H1 (cell line): ENCODE measurements at regions of chr10 and their contacts with region 1.

Region 1: GRCh38 chr10:102352066-102352715 is 43.3 kb upstream of the NFKB2 start:
- DNase-seq: peak in 1 of 2 experiments; percentile 86
- H3K4me3 ChIP-seq: no peak overlapping the region
- H3K27ac ChIP-seq: no peak overlapping the region
- H3K4me1 ChIP-seq: no peaks in the 10 kb centered on the region
- H3K27me3 ChIP-seq: no peaks in the 10 kb centered on the region; a peak in 1 of 7 replicates
- CTCF ChIP-seq: peak; percentile 77 to 94 (median 91)
- EP300 ChIP-seq: no peak
- POLR2A ChIP-seq: no peak
- RAD21 ChIP-seq: peak; percentile 84 to 90

Region 2: DNA sequence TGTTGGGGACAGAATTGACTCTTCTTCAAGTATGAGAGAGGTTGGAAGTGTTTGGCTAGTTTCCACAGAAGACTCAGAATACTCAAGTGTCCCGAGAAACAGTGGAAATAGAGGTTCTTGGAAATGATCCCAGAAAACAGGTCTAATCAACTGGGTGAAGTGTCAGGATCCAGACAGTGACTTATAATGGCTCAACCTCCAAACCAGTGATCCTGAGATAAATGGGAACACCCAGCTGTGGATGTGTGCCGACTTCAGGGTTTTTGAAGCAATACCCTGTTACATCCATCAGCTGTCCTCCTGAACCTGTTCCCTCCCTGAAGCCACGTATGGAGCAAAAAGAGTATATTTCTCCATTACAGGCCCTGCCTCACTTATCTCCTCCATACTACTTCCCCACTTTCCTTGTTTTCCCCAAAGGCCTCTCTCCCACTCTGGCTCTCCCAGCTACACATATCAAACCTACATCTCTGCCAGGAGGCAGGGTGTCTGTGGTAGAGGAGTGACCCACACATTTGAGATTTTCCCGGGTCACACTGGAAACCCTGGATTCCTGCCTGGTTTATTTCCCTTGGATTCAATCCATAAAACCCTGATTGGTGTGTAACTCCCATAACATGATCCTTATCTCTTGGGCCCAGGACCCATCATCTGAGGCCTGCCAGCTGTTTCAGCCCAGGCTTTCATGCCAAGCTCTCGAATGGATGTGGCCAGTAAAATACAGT is 143.7 kb before region 1 on chr10:
- CTCF ChIA-PET with region 1: interaction called, 10 read pairs
- POLR2A ChIA-PET with region 1: interaction called, 3 read pairs
- DNase-seq: no peak
- H3K4me3 ChIP-seq: no peak overlapping the region
- H3K27ac ChIP-seq: no peak overlapping the region
- H3K4me1 ChIP-seq: no peaks in the 10 kb centered on the region
- H3K27me3 ChIP-seq: no peaks in the 10 kb centered on the region
- CTCF ChIP-seq: no peak
- EP300 ChIP-seq: no peak
- POLR2A ChIP-seq: no peak
- RAD21 ChIP-seq: no peak

Region 3: GRCh38 chr10:102262744-102263370 is 89.3 kb before region 1 on chr10:
- CTCF ChIA-PET with region 1: interaction called, 19 read pairs
- POLR2A ChIA-PET with region 1: no interaction called
- DNase-seq: no peak
- H3K4me3 ChIP-seq: no peak overlapping the region
- H3K27ac ChIP-seq: no peak overlapping the region
- H3K4me1 ChIP-seq: no peaks in the 10 kb centered on the region
- H3K27me3 ChIP-seq: no peaks in the 10 kb centered on the region
- CTCF ChIP-seq: no peak
- EP300 ChIP-seq: no peak
- POLR2A ChIP-seq: no peak
- RAD21 ChIP-seq: no peak

Region 4: DNA sequence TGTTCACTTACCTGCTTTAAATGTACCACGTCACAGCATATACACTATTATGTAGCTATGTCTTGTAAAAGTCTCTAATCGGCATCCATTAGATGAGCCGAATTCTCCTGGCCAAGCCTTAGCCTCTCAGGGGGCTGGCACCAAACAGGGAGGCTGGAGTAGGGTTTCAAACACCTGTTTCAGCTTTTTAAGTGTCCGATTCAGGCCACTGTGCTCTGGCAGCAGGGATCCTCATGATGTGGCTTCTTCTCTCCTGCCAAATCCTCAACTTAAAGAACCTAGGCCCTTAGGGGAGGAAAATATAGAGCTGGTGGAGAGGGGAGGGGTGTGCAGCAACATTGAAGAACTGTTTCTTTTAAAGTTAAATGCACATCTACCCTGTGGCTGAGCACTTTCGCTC is 25.2 kb before region 1 on chr10:
- CTCF ChIA-PET with region 1: interaction called, 17 read pairs
- POLR2A ChIA-PET with region 1: no interaction called
- DNase-seq: no peak
- H3K4me3 ChIP-seq: no peak overlapping the region
- H3K27ac ChIP-seq: no peak overlapping the region
- H3K4me1 ChIP-seq: peaks cover 0 to 2% (median 0%) of the 10 kb centered on the region in 4 experiments; a peak in 2 of 7 replicates
- H3K27me3 ChIP-seq: no peaks in the 10 kb centered on the region
- CTCF ChIP-seq: no peak
- EP300 ChIP-seq: no peak
- POLR2A ChIP-seq: no peak
- RAD21 ChIP-seq: no peak

Region 5: GRCh38 chr10:102368072-102368471 is 15.9 kb after region 1 on chr10:
- CTCF ChIA-PET with region 1: interaction called, 198 read pairs
- POLR2A ChIA-PET with region 1: no interaction called
- DNase-seq: no peak
- H3K4me3 ChIP-seq: no peak overlapping the region
- H3K27ac ChIP-seq: no peak overlapping the region
- H3K4me1 ChIP-seq: no peaks in the 10 kb centered on the region
- H3K27me3 ChIP-seq: no peaks in the 10 kb centered on the region
- CTCF ChIP-seq: no peak
- EP300 ChIP-seq: no peak
- POLR2A ChIP-seq: no peak
- RAD21 ChIP-seq: no peak

Region 6: DNA sequence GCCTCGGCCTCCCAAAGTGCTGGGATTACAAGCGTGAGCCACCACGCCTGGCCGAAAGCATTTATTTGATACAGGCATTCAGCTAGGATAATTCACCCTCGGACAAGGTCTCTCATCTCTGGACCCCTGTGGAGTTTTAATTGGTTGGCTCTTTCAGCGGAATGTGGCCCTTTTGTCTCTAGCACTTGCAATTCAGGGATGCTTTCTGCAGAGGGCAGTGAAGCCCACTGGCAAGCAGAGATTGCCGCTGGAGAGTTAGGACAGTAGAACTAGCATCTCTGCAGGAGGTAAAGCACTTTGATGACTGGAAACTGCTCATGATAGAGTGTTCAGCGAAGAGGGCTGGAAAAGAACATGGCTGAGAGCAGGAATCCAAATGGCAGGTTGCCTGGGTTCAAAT is 213.6 kb after region 1 on chr10:
- CTCF ChIA-PET with region 1: no interaction called
- POLR2A ChIA-PET with region 1: no interaction called
- DNase-seq: peak; percentile 77 to 78
- H3K4me3 ChIP-seq: no peak overlapping the region
- H3K27ac ChIP-seq: no peak overlapping the region
- H3K4me1 ChIP-seq: 0 out of 7 replicates have a peak, but pooled peaks cover 0 to 3% (median 0%) of the 10 kb centered on the region in 4 experiments
- H3K27me3 ChIP-seq: peaks cover 10 to 49% (median 37%) of the 10 kb centered on the region in 4 experiments
- CTCF ChIP-seq: peak; percentile 56 to 88 (median 63)
- EP300 ChIP-seq: 0 out of 3 replicates have a peak, but pooled peaks of 1 of the 2 experiments have one; percentile 50
- POLR2A ChIP-seq: no peak
- RAD21 ChIP-seq: peak; percentile 58 to 69